Activated T-helper 1 cell treated with anti-CD3 and anti-CD28 coated beads, Interleukin-12 subunit alpha, Interleukin-12 subunit beta, Interleukin-2, Interleukin-4 antibody, amounts not matched to agents 30 ng/mL and 10 ng/mL and 1 ng/mL, durations not matched to agents 14 hours and 24 hours and 36 hours (primary cell): ENCODE measurements at regions of chr18 and their contacts with region 1.

Region 1: DNA sequence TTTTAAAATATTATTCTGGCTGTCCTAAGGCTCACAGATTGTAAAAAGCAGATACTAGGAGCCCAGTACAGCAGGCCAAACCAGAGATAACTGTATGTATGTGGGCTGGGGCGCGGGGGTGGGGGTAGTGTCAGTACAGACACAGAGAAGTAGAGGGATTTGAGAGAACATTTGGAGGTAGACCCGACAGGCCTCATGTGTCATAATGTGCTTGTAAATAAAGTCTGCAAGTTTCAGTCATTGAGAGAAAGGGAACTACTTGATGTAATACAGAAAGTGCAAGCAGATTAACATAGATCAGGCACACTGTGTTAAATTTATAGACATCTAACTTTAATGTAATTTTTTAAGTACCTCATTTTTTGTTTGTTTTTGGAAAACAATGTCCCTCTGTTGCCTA is 7.4 kb upstream of the POLI start:
- DNase-seq: no peak
- H3K4me3 Mint-ChIP-seq: peak overlapping the region; percentile 77
- H3K27ac Mint-ChIP-seq: peak overlapping the region; percentile 94
- H3K4me1 Mint-ChIP-seq: peaks cover 66% of the 10 kb centered on the region
- H3K27me3 Mint-ChIP-seq: no peaks in the 10 kb centered on the region

Region 2: GRCh38 chr18:53984021-53984420 is 277.9 kb before region 1 on chr18:
- intact Hi-C with region 1: no loop called
- DNase-seq: no peak
- H3K4me3 Mint-ChIP-seq: no peak overlapping the region
- H3K27ac Mint-ChIP-seq: no peak overlapping the region
- H3K4me1 Mint-ChIP-seq: no peaks in the 10 kb centered on the region
- H3K27me3 Mint-ChIP-seq: no peaks in the 10 kb centered on the region

Region 3: GRCh38 chr18:54173980-54174630 is 87.8 kb before region 1 on chr18:
- intact Hi-C with region 1: loop called (anchors 1 kb)
- DNase-seq: no peak
- H3K4me3 Mint-ChIP-seq: peak overlapping the region; percentile 49
- H3K27ac Mint-ChIP-seq: peak overlapping the region; percentile 96
- H3K4me1 Mint-ChIP-seq: peaks cover 69% of the 10 kb centered on the region
- H3K27me3 Mint-ChIP-seq: no peaks in the 10 kb centered on the region

Region 4: DNA sequence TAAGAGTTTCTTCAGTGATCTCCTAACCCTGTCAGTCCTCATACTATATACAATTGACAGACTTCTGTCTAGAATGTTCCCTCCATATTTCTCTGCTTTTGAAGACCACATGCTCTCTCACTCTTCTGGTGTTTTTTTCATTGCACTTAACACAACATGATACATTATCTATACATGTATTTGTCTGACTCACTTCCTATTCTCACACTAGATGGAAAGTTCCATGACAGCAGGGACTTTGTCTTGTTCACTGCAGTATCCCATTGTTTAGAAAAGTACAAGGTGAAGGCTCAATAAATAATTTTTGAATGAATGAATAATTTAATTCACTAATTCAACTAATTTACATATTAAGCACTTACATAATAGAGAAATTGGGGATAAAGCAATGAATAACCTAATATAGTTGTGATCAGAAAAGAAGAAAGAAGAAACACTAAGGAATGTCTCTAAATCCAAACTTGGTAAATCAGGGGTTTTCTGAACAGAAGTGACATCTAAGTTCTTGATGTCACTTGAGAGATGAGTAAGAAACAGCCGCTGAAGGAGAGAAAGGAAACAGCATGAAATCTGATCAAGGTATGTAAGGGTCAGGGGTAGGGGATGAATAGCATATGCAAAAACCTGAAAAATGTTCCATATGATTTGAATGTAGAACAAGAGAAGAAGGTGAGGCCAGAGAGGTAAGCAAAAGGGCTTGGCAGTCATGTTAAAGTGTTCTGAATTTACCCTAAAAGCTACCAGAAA is 79.9 kb before region 1 on chr18:
- intact Hi-C with region 1: loop called (anchors 1 kb)
- DNase-seq: no peak
- H3K4me3 Mint-ChIP-seq: no peak overlapping the region
- H3K27ac Mint-ChIP-seq: no peak overlapping the region
- H3K4me1 Mint-ChIP-seq: peaks cover 22% of the 10 kb centered on the region
- H3K27me3 Mint-ChIP-seq: no peaks in the 10 kb centered on the region

Region 5: DNA sequence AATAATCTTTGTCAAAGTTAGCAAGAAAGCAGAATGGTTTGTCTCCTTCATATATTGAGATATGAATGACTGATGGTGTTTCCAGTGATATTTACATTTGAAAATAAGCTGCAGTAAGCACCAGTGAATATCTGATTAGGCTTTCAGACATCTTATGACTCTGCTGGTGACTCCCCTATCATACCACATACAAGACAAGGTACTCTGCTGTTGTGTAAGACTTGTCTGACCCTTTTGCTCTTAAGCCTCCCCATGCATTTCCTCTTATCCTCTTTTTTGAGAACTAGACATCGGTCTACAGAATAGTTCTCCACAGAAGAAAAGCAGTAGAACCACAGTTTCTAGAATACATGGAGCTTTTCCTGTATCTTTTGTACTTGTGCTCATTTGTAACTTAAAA is 16.7 kb after region 1 on chr18:
- intact Hi-C with region 1: no loop called
- DNase-seq: no peak
- H3K4me3 Mint-ChIP-seq: no peak overlapping the region
- H3K27ac Mint-ChIP-seq: no peak overlapping the region
- H3K4me1 Mint-ChIP-seq: peaks cover 27% of the 10 kb centered on the region
- H3K27me3 Mint-ChIP-seq: no peaks in the 10 kb centered on the region

Region 6: DNA sequence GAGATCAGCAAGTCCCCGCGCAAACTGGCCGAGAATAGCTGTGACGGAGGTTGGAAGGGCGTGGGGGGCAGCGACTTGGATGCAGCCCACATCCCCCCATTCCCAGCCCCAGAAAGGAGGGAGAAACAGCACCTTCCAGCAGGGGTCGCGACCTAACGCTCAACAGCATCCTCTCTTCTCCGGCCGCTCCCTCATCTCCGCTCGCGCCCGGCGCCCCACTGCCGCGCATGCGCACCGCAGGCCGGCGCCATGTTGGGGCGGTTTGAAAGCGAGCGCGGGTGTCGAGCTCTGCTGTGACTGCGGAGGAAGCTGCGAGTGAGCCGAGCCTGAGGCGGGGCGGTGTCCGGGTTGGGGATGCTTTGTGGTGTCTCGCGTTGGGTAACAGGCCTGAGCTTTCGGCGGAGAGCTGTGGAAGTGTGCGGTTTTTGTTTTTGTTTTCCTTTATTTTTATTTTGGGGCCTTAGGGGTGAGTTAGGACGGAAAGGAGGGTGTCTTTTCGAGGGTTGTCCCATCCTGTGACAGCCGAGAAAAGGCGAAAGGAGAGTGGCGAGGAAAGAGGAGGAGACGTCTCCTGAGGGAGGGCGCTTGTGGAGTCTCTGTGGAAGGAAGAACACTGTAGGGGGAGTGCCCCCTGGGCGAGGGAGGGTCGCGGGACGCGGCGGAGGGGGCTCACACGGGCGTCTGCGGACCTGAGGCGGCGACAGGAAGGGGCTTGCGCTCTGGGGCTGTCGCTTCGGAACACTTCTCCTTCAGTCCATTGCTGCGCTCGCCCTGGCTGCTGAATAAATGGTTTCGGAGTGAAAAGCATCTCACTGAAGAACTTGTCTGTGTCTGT is 96.0 kb after region 1 on chr18 and contains the starts of genes C18orf54 and STARD6:
- intact Hi-C with region 1: loop called (anchors 1 kb)
- DNase-seq: peak; percentile 93
- H3K4me3 Mint-ChIP-seq: peak within 1 kb of the TSS; percentile 98
- H3K27ac Mint-ChIP-seq: peak within 1 kb of the TSS; percentile 97
- H3K4me1 Mint-ChIP-seq: peaks cover 34% of the 10 kb centered on the region
- H3K27me3 Mint-ChIP-seq: no peaks in the 10 kb centered on the region
- total RNA-seq, gene C18orf54: 10.4 and 10.7 TPM in 2 replicates
- total RNA-seq, gene STARD6: 0.54 and 0.65 TPM in 2 replicates

Region 7: GRCh38 chr18:54776282-54776977 is 514.5 kb after region 1 on chr18:
- intact Hi-C with region 1: loop called (anchors 2 kb)
- DNase-seq: peak; percentile 14
- H3K4me3 Mint-ChIP-seq: no peak overlapping the region
- H3K27ac Mint-ChIP-seq: peak overlapping the region; percentile 71
- H3K4me1 Mint-ChIP-seq: peaks cover 15% of the 10 kb centered on the region
- H3K27me3 Mint-ChIP-seq: peaks cover 4% of the 10 kb centered on the region